ENCODE measurements at regions of chr16 and their contacts with region 1.

Region 1: GRCh38 chr16:29745853-29746345 is at the start of gene C16orf54:
- DNase-seq: peak; percentile 96 to 98 (median 97)
- H3K4me3 ChIP-seq: peak within 1 kb of the TSS; percentile 78 to 92 (median 91)
- H3K4me3 Mint-ChIP-seq: peak within 1 kb of the TSS; percentile 98 to 100
- H3K27ac ChIP-seq: peak within 1 kb of the TSS; percentile 85 to 97
- H3K27ac Mint-ChIP-seq: peak within 1 kb of the TSS; percentile 97 to 100 (median 100)
- H3K4me1 ChIP-seq: peaks cover 69 to 87% of the 10 kb centered on the region in 2 donors
- H3K4me1 Mint-ChIP-seq: peaks cover 75% of the 10 kb centered on the region
- H3K27me3 ChIP-seq: no peaks in the 10 kb centered on the region
- H3K27me3 Mint-ChIP-seq: peaks cover 0 to 8% (median 2%) of the 10 kb centered on the region in 3 donors
- CTCF ChIP-seq: no peak
- polyA plus RNA-seq, gene C16orf54: 24.6 to 32.0 (median 29.2) TPM

Region 2: DNA sequence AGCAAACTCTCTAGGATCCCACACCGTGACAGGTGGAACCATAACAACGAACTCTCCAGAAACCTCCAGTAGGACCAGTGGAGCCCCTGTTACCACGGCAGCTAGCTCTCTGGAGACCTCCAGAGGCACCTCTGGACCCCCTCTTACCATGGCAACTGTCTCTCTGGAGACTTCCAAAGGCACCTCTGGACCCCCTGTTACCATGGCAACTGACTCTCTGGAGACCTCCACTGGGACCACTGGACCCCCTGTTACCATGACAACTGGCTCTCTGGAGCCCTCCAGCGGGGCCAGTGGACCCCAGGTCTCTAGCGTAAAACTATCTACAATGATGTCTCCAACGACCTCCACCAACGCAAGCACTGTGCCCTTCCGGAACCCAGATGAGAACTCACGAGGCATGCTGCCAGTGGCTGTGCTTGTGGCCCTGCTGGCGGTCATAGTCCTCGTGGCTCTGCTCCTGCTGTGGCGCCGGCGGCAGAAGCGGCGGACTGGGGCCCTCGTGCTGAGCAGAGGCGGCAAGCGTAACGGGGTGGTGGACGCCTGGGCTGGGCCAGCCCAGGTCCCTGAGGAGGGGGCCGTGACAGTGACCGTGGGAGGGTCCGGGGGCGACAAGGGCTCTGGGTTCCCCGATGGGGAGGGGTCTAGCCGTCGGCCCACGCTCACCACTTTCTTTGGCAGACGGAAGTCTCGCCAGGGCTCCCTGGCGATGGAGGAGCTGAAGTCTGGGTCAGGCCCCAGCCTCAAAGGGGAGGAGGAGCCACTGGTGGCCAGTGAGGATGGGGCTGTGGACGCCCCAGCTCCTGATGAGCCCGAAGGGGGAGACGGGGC is 81.6 kb before region 1 on chr16:
- intact Hi-C with region 1: loop called in 1 of 2 experiments (anchors 2 kb)
- DNase-seq: peak; percentile 48 to 57 (median 50)
- H3K4me3 ChIP-seq: peak overlapping the region; percentile 52 to 97 (median 71)
- H3K4me3 Mint-ChIP-seq: peak overlapping the region; percentile 93 to 96
- H3K27ac ChIP-seq: peak overlapping the region; percentile 76 to 86
- H3K27ac Mint-ChIP-seq: peak overlapping the region; percentile 87 to 98 (median 92)
- H3K4me1 ChIP-seq: peaks cover 63 to 72% of the 10 kb centered on the region in 2 donors
- H3K4me1 Mint-ChIP-seq: peaks cover 69% of the 10 kb centered on the region
- H3K27me3 ChIP-seq: no peaks in the 10 kb centered on the region
- H3K27me3 Mint-ChIP-seq: peaks cover 0 to 3% (median 0%) of the 10 kb centered on the region in 3 donors
- CTCF ChIP-seq: no peak

Region 3: DNA sequence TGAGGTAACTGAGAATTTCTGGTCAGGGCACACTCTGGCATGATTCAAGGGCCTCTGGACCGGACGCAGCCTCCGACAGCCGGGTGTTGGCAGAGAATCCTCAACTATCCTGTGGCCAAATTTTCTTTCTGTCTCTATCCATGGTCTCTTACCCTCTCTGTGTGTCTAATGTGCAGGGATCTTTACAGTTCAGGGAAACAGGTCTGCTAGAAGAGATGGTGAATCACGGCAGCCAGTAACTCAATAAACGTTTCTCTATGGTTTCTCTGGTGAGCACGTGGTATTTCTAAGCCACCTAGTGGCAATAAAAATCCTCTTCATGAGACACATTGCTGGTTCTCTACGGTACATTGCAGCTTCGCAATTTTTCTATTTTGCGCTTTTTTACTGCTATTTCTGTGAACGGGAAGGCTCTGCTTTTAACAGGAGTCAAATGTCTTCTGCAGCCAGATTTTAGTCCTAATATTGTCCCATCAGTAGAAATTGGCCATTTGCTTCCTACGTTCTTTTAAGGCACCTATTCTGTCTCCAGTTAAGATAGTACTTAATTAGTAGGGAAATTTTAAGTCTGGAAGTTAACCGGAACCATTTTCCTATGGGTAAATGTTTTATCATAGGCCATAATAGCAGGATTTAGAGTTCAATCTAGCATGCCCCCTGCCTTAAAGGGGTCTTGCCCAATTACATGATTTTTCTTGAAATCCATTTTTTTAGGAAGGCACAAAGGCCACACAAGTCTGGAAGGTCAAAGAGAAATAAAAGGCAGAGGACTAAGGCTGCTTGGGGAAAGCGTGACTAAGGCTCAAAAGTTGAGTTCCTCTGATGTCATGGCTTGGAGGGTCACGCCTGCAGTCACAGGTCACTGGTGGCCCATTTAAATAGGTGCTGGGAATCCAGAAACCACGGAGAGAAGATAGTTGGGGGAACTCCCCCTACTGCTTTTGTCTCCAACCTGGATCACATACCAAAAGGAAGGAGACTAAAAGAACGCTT is 35.4 kb before region 1 on chr16:
- intact Hi-C with region 1: loop called in 1 of 2 experiments (anchors 5 kb)
- DNase-seq: peak; percentile 54 to 79 (median 78)
- H3K4me3 ChIP-seq: peak overlapping the region in 1 of 3 experiments; percentile 9
- H3K4me3 Mint-ChIP-seq: peak overlapping the region in 1 of 2 donors; percentile 63
- H3K27ac ChIP-seq: peak overlapping the region; percentile 41 to 57
- H3K27ac Mint-ChIP-seq: peak overlapping the region in 6 of 7 donors; percentile 79 to 92 (median 90)
- H3K4me1 ChIP-seq: peaks cover 22 to 30% of the 10 kb centered on the region in 2 donors
- H3K4me1 Mint-ChIP-seq: peaks cover 26% of the 10 kb centered on the region
- H3K27me3 ChIP-seq: no peaks in the 10 kb centered on the region
- H3K27me3 Mint-ChIP-seq: peaks cover 3 to 7% (median 6%) of the 10 kb centered on the region in 3 donors
- CTCF ChIP-seq: peak; percentile 81

Region 4: GRCh38 chr16:29784901-29785500 is 39.1 kb after region 1 on chr16:
- intact Hi-C with region 1: loop called (anchors 2 to 5 kb)
- DNase-seq: peak; percentile 64 to 69 (median 69)
- H3K4me3 ChIP-seq: peak overlapping the region in 2 of 3 experiments; percentile 4 to 53
- H3K4me3 Mint-ChIP-seq: peak overlapping the region; percentile 62 to 79
- H3K27ac ChIP-seq: no peak overlapping the region
- H3K27ac Mint-ChIP-seq: peak overlapping the region in 2 of 7 donors; percentile 18 to 75
- H3K4me1 ChIP-seq: peaks cover 13 to 17% of the 10 kb centered on the region in 2 donors
- H3K4me1 Mint-ChIP-seq: peaks cover 16% of the 10 kb centered on the region
- H3K27me3 ChIP-seq: no peaks in the 10 kb centered on the region
- H3K27me3 Mint-ChIP-seq: peaks cover 0 to 2% (median 0%) of the 10 kb centered on the region in 3 donors
- CTCF ChIP-seq: peak; percentile 85

Region 5: DNA sequence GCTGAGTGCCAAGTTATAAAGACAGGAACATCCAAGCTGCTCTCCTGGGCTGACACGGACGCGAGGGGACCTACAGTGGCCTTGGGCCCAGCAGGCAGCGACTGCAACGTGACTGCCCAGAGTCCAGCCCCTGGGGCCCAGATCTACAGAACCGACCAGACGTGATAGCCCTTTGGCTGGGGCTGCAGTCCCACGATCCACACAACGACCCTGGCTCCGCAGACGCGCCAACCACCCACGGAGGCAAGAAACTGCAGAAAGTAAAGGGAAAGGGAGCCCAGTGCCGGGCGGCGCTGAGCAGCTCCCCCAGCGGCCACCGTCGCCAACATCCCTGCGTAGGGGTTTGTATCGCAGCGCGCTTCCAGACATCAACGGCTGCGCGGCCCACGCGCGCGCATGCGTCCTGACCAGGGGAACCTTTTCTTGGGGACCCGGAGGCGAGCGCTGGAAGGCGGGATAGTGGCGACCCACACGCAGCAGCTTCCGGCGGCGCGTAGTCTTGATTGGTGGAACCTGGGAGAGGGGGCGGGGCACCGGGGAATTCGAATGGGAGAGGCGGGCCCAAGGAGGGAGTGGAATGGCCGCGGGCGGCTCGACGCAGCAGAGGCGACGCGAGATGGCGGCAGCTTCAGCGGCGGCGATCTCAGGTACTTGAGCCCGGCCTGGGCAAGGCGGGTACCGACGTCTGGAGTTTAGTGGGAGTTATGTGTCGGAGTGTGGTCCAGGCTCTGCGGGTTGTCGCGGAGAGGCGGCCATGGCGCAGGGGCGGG is 44.5 kb after region 1 on chr16 and contains the start of gene KIF22:
- intact Hi-C with region 1: loop called (anchors 2 to 5 kb)
- DNase-seq: peak; percentile 99 to 100 (median 99)
- H3K4me3 ChIP-seq: peak within 1 kb of the TSS; percentile 67 to 97 (median 97)
- H3K4me3 Mint-ChIP-seq: peak within 1 kb of the TSS; percentile 97 to 98
- H3K27ac ChIP-seq: peak within 1 kb of the TSS; percentile 78 to 83
- H3K27ac Mint-ChIP-seq: peak within 1 kb of the TSS; percentile 89 to 95 (median 94)
- H3K4me1 ChIP-seq: peaks cover 26 to 36% of the 10 kb centered on the region in 2 donors
- H3K4me1 Mint-ChIP-seq: peaks cover 43% of the 10 kb centered on the region
- H3K27me3 ChIP-seq: no peaks in the 10 kb centered on the region
- H3K27me3 Mint-ChIP-seq: peaks cover 0 to 1% (median 0%) of the 10 kb centered on the region in 3 donors
- CTCF ChIP-seq: peak; percentile 77
- polyA plus RNA-seq, gene KIF22: 22.0 to 46.2 (median 28.9) TPM

Region 6: GRCh38 chr16:29943846-29944669 is 198.2 kb after region 1 on chr16:
- intact Hi-C with region 1: no loop called
- DNase-seq: no peak
- H3K4me3 ChIP-seq: no peak overlapping the region
- H3K4me3 Mint-ChIP-seq: no peak overlapping the region
- H3K27ac ChIP-seq: no peak overlapping the region
- H3K27ac Mint-ChIP-seq: no peak overlapping the region
- H3K4me1 ChIP-seq: no peaks in the 10 kb centered on the region
- H3K4me1 Mint-ChIP-seq: no peaks in the 10 kb centered on the region
- H3K27me3 ChIP-seq: no peaks in the 10 kb centered on the region
- H3K27me3 Mint-ChIP-seq: peaks cover 6 to 12% (median 10%) of the 10 kb centered on the region in 3 donors
- CTCF ChIP-seq: no peak